HepG2 (cell line): ENCODE measurements at regions of chr12 and their contacts with region 1.

Region 1: DNA sequence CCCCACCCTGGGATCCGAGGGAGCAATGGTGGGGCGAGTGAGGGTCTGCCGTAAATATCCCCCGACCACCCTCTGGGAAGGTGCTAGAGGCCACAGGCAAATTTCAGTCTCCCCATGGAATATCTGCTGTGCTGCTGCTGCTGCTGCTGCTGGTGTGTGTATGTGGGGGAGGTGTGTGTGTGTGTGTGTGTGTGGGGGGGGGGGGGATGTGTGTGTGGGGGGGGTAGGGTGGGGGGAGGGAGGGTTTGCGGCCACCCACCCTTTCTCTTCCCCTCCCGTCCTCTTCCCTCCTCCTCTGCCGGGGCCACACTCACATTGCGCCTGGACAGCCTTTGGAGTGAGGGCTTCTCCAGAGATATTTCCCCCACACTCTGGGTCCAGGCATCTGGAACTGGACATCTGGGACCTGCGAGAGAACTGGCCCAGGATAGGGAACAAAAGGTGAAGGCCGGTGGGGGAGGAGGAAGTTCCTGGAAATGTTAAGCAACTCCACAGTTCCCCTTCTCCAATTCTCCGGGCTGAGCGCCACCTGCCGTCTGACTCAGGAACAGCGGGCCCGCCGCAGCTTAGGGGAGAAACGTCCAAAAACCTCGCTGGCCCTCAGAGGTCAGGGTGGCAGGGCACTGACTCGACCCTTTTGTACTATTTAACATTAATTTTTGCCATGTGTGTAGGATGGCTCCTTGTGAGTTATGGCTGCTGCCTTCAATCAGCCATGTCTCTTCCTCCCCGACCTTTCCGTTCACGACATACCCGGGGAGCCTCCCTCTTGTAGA is at the start of gene C1RL:
- DNase-seq: peak; percentile 89
- ATAC-seq: peak; percentile 66
- H3K4me3 ChIP-seq: peak within 1 kb of the TSS; percentile 72 to 91 (median 74)
- H3K27ac ChIP-seq: peak within 1 kb of the TSS; percentile 99
- H3K4me1 ChIP-seq: peaks cover 25% of the 10 kb centered on the region
- H3K27me3 ChIP-seq: no peaks in the 10 kb centered on the region; a peak in 1 of 5 replicates
- CTCF ChIP-seq: peak; percentile 95
- EP300 ChIP-seq: peak; percentile 45 to 70; a peak in 3 of 4 replicates
- POLR2A ChIP-seq: peak in 1 of 2 experiments; percentile 58; a peak in 2 of 4 replicates
- RAD21 ChIP-seq: peak; percentile 90
- total RNA-seq, gene C1RL: 14.2 and 28.9 TPM in 2 replicates

Region 2: DNA sequence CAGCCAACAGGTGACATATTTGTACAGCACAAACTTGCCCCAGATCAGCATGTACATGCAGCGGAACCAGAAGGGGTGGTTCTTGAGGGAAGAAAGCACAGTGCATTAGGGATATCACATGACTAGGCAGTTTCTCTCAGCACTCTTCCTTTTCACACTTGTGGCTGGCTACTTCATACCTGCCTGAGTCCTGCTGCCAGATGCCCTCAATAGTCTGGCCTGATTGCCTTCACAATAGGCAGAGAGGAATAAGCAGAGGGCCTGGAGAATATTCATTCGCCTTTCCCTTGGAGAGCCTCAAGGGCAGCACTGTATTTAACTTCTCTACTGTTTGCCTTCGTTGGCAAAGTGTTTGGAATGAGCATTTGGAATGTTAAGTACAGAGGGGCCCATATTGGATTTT is 130.4 kb before region 1 on chr12:
- CTCF ChIA-PET with region 1: no interaction called
- POLR2A ChIA-PET with region 1: interaction called, 18 read pairs
- in situ Hi-C with region 1: no loop called
- intact Hi-C with region 1: no loop called
- DNase-seq: no peak
- ATAC-seq: no peak
- H3K4me3 ChIP-seq: no peak overlapping the region
- H3K27ac ChIP-seq: peak overlapping the region; percentile 98
- H3K4me1 ChIP-seq: peaks cover 55% of the 10 kb centered on the region
- H3K27me3 ChIP-seq: no peaks in the 10 kb centered on the region
- CTCF ChIP-seq: no peak
- EP300 ChIP-seq: no peak
- POLR2A ChIP-seq: no peak
- RAD21 ChIP-seq: no peak

Region 3: GRCh38 chr12:7060353-7060954 is 48.5 kb before region 1 on chr12 and contains the start of gene C1S:
- CTCF ChIA-PET with region 1: interaction called, 16 read pairs
- POLR2A ChIA-PET with region 1: interaction called, 45 read pairs
- in situ Hi-C with region 1: loop called (anchors 10 kb)
- intact Hi-C with region 1: loop called (anchors 1 kb)
- DNase-seq: peak; percentile 93
- ATAC-seq: peak; percentile 93
- H3K4me3 ChIP-seq: peak within 1 kb of the TSS in 2 of 3 experiments; percentile 6 to 27; a peak in 3 of 6 replicates
- H3K27ac ChIP-seq: peak within 1 kb of the TSS; percentile 30
- H3K4me1 ChIP-seq: peaks cover 64% of the 10 kb centered on the region
- H3K27me3 ChIP-seq: no peaks in the 10 kb centered on the region
- CTCF ChIP-seq: peak; percentile 94
- EP300 ChIP-seq: peak in 1 of 2 experiments; percentile 37; a peak in 1 of 4 replicates
- POLR2A ChIP-seq: no peak
- RAD21 ChIP-seq: peak; percentile 96
- total RNA-seq, gene C1S: 8.2 and 18.2 TPM in 2 replicates

Region 4: DNA sequence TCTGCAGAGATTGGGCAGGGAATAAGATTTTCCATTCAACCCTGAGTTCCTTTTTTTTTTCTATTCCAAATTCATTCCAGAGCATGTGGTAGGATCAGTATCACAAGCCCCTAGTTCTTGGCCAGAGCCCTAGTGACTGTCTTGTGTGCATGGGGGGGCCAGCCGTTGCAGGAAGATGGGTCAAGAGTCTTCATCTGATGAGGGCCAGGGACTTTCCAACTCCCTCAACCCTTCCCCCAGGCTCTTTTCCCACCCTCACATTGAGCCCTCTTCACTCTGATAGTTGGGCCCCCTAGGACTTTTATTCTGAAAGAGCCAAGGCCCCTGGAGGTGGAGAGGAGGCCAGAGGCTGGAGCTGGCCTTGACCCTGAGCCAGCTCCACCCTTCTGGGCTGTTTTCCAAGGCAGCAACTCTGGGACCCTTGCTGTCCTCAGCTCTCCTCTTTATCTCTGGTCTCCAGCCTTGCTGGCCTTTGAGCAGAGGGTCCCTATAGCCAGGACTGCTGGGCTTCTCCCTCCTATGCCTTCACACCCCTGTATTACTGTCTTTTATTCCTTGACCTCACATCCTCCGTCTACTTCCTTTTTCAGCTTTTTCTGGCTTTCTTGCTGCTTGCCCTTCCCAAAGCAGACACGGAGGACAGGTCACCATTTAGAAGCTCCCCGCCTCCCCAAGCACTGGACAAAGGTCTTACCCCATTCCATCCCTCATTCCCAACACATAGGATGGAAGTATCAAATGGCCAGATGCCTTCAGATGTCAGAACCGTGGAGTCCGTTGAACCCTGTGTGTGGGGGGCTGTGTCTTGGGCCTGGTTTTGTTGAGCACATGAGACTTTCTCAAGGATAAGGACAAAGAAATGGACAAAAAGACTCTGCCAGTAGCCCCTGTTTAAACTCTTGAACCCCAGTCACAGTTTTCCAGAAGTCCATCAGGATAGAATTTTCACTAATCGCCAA is 14.1 kb after region 1 on chr12:
- CTCF ChIA-PET with region 1: no interaction called
- POLR2A ChIA-PET with region 1: interaction called, 88 read pairs
- in situ Hi-C with region 1: no loop called
- intact Hi-C with region 1: no loop called
- DNase-seq: no peak
- ATAC-seq: peak; percentile 26
- H3K4me3 ChIP-seq: peak overlapping the region; percentile 20 to 65 (median 29); a peak in 5 of 6 replicates
- H3K27ac ChIP-seq: peak overlapping the region; percentile 77
- H3K4me1 ChIP-seq: peaks cover 74% of the 10 kb centered on the region
- H3K27me3 ChIP-seq: no peaks in the 10 kb centered on the region; a peak in 1 of 5 replicates
- CTCF ChIP-seq: no peak
- EP300 ChIP-seq: peak in 1 of 2 experiments; percentile 82; a peak in 2 of 4 replicates
- POLR2A ChIP-seq: peak in 1 of 2 experiments; percentile 17; a peak in 1 of 4 replicates
- RAD21 ChIP-seq: no peak

Region 5: GRCh38 chr12:7197841-7198240 is 88.9 kb after region 1 on chr12:
- CTCF ChIA-PET with region 1: no interaction called
- POLR2A ChIA-PET with region 1: no interaction called
- in situ Hi-C with region 1: no loop called
- intact Hi-C with region 1: no loop called
- DNase-seq: peak; percentile 73
- ATAC-seq: peak; percentile 89
- H3K4me3 ChIP-seq: peak overlapping the region; percentile 6 to 38 (median 11); a peak in 4 of 6 replicates
- H3K27ac ChIP-seq: peak overlapping the region; percentile 71
- H3K4me1 ChIP-seq: peaks cover 25% of the 10 kb centered on the region
- H3K27me3 ChIP-seq: no peaks in the 10 kb centered on the region
- CTCF ChIP-seq: no peak
- EP300 ChIP-seq: no peak
- POLR2A ChIP-seq: no peak
- RAD21 ChIP-seq: no peak